PC-9 (cell line): ENCODE measurements at regions of chr15 and their contacts with region 1.

Region 1: GRCh38 chr15:66497502-66498455 is at the start of gene SNAPC5:
- DNase-seq: peak; percentile 88 to 96
- H3K4me3 ChIP-seq: peak within 1 kb of the TSS; percentile 91
- H3K27ac ChIP-seq: peak within 1 kb of the TSS; percentile 77
- H3K4me1 ChIP-seq: peaks cover 24% of the 10 kb centered on the region
- H3K27me3 ChIP-seq: no peaks in the 10 kb centered on the region
- CTCF ChIP-seq: peak; percentile 89
- total RNA-seq, gene SNAPC5: 15.8 and 17.9 TPM in 2 replicates

Region 2: GRCh38 chr15:65610871-65611718 is 886.7 kb before region 1 on chr15 and contains the start of gene INTS14:
- CTCF ChIA-PET with region 1: no interaction called
- POLR2A ChIA-PET with region 1: no interaction called
- intact Hi-C with region 1: loop called (anchors 10 kb)
- DNase-seq: peak; percentile 79 to 97
- H3K4me3 ChIP-seq: peak within 1 kb of the TSS; percentile 88
- H3K27ac ChIP-seq: peak within 1 kb of the TSS; percentile 91
- H3K4me1 ChIP-seq: peaks cover 21% of the 10 kb centered on the region
- H3K27me3 ChIP-seq: no peaks in the 10 kb centered on the region
- CTCF ChIP-seq: peak; percentile 68
- total RNA-seq, gene INTS14: 46.6 and 53.7 TPM in 2 replicates

Region 3: GRCh38 chr15:66356345-66357236 is 141.2 kb before region 1 on chr15 and contains the start of gene TIPIN:
- CTCF ChIA-PET with region 1: no interaction called
- POLR2A ChIA-PET with region 1: no interaction called
- intact Hi-C with region 1: loop called (anchors 1 kb)
- DNase-seq: peak; percentile 76 to 95
- H3K4me3 ChIP-seq: peak within 1 kb of the TSS; percentile 68
- H3K27ac ChIP-seq: 0 out of 2 replicates have a peak within 1 kb of the TSS, but pooled peaks have one; percentile 1
- H3K4me1 ChIP-seq: peaks cover 26% of the 10 kb centered on the region
- H3K27me3 ChIP-seq: no peaks in the 10 kb centered on the region
- CTCF ChIP-seq: no peak
- total RNA-seq, gene TIPIN: 12.9 and 13.1 TPM in 2 replicates

Region 4: GRCh38 chr15:66459818-66460615 is 37.8 kb before region 1 on chr15:
- CTCF ChIA-PET with region 1: no interaction called
- POLR2A ChIA-PET with region 1: interaction called, 9 read pairs
- intact Hi-C with region 1: loop called (anchors 5 kb)
- DNase-seq: peak; percentile 49 to 73
- H3K4me3 ChIP-seq: no peak overlapping the region
- H3K27ac ChIP-seq: peak overlapping the region; percentile 93
- H3K4me1 ChIP-seq: peaks cover 59% of the 10 kb centered on the region
- H3K27me3 ChIP-seq: no peaks in the 10 kb centered on the region
- CTCF ChIP-seq: no peak

Region 5: GRCh38 chr15:66841953-66842681 is 344.3 kb after region 1 on chr15:
- CTCF ChIA-PET with region 1: interaction called, 10 read pairs
- POLR2A ChIA-PET with region 1: no interaction called
- intact Hi-C with region 1: no loop called
- DNase-seq: peak; percentile 77 to 92
- H3K4me3 ChIP-seq: peak overlapping the region; percentile 46; the same call in 1 of the 2 replicates
- H3K27ac ChIP-seq: peak overlapping the region; percentile 81
- H3K4me1 ChIP-seq: peaks cover 29% of the 10 kb centered on the region
- H3K27me3 ChIP-seq: no peaks in the 10 kb centered on the region
- CTCF ChIP-seq: no peak